Gastrocnemius medialis (tissue), 4 donors: ENCODE measurements at regions of chr1 and their contacts with region 1.

Region 1: DNA sequence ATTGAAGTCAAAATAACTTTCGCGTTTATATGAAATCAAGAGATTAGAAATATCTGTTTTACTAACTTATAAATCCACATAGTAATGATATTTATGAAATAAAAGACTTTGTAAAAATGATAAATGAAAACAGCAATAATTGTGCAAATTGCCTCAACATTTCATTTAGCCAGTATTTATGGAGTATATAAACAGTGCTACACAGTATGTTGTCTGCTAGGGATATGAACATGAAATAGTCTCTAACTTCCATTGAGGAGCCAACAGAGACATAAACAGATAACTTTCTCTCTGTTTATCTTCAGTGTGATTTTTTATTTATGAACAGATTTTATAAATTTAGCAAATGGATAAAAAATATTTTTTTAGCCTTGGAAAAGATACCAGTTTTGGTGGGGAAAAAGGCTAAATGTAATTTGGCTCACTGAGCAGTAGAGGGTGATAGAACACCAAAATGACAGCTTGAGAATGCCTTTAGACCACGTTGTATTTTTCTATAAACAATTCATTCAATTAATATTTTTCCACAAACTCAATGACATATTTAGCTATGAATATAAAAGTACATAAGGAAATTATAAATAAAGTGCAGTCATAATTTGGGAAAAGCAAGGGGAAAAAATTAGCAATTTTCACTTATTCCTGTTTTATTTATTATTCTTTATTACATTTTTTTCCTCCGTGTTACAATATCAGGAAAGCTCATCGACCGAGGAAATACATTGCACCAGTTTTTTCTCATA is 47.5 kb upstream of the EEIG2 start:
- DNase-seq: no peak
- ATAC-seq: no peak
- H3K4me3 ChIP-seq: no peak overlapping the region
- H3K27ac ChIP-seq: no peak overlapping the region
- H3K4me1 ChIP-seq: no peaks in the 10 kb centered on the region
- H3K27me3 ChIP-seq: no peaks in the 10 kb centered on the region
- CTCF ChIP-seq: peak; percentile 30 to 69 (median 62)
- POLR2A ChIP-seq: no peak

Region 2: GRCh38 chr1:108327534-108328462 is 184.6 kb before region 1 on chr1:
- in situ Hi-C with region 1: loop called in 1 of 4 experiments (anchors 25 kb)
- intact Hi-C with region 1: no loop called
- DNase-seq: no peak
- ATAC-seq: no peak
- H3K4me3 ChIP-seq: no peak overlapping the region
- H3K27ac ChIP-seq: no peak overlapping the region
- H3K4me1 ChIP-seq: no peaks in the 10 kb centered on the region
- H3K27me3 ChIP-seq: no peaks in the 10 kb centered on the region
- CTCF ChIP-seq: no peak
- POLR2A ChIP-seq: no peak

Region 3: DNA sequence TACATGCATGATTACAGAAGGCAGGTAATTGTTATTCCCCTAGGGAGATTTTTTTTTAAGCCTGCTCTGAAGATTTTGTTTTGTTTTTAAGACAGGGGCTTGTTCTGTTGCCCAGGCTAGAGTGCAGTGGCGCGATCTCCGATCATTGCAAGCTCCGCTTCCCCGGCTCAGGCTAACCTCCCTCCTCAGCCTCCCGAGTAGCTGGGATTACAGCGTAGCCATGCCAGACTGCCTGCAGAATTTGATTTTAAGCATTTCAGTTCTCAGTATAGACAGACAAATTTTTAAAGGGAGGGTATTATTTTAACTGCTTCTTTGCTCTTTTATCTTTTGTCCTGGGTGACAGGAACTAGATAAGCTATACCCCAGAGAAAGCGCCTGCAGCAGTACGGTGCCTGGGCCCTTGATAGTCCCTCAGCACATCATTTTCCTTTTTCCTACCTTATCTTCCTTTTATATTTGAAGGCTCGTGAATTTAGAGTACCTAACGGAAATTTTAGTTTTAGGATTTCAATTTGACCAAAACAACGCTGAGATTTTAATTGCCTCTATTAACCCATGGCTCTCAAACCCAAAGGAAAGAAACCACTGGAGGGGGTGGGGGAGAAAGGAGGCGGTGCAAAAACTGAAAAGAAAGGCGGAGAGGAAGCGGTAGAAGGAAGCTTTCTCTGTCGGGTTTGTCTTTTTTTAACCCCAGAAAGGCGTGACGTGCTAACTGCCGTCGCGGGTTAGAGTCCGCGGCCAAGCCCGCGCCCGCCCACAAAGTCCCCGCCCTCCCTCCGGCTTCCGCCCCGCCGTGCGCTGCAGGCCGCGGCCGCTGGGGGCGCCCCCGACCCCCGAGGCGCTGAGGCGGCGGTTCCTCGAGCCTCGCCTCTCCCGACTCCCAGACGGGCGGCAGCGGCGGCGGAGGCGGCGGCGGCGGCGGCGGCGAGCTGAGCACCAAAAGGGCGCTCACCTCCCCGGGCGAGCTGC is 47.1 kb after region 1 on chr1 and contains the start of gene EEIG2:
- in situ Hi-C with region 1: no loop called
- intact Hi-C with region 1: loop called (anchors 10 kb)
- DNase-seq: peak; percentile 50 to 69
- ATAC-seq: peak; percentile 89 to 94
- H3K4me3 ChIP-seq: peak within 1 kb of the TSS; percentile 58 to 75 (median 62)
- H3K27ac ChIP-seq: peak within 1 kb of the TSS; percentile 44 to 65 (median 54)
- H3K4me1 ChIP-seq: peaks cover 13 to 14% of the 10 kb centered on the region in 2 donors
- H3K27me3 ChIP-seq: no peaks in the 10 kb centered on the region
- CTCF ChIP-seq: peak; percentile 55 to 90 (median 81)
- POLR2A ChIP-seq: peak in 1 of 2 donors; percentile 28
- total RNA-seq, gene EEIG2: 0.41 to 3.6 (median 1.5) TPM